Right cardiac atrium (tissue), 5 donors: ENCODE measurements at regions of chr4 and their contacts with region 1.

Region 1: GRCh38 chr4:121252224-121252806 is 88.2 kb upstream of the TNIP3 start:
- DNase-seq: peak; percentile 55 to 69 (median 69)
- ATAC-seq: peak; percentile 64 to 83
- H3K4me3 ChIP-seq: no peak overlapping the region
- H3K27ac ChIP-seq: no peak overlapping the region
- H3K4me1 ChIP-seq: no peaks in the 10 kb centered on the region
- H3K27me3 ChIP-seq: no peaks in the 10 kb centered on the region

Region 2: DNA sequence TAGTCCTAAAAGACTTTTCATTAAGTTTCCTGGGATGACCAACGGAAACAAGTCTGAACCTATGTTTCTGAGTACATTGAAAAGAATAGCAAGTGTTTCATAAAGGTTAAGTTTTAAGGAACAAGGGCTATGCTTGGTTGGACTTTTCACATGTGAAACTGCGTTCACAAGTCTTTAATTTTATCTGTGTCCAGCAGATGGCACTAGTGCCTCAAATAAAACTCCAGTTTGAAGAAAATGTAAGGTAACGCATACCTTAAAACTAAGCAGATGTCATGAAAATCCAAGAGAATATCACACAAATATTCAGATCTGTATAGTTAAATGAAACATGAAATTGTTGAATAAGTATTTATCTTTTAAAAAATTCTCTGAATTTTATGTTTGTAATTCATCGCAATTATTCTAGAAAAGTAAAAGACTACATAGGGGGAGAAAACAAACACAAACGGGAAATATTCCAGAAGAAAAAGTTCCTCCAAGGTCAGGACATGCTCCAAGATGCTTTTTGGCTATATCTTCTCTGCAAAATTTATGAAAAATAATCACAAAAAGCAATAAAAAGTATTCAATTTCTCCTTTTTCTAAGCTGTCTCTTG is 1096.1 kb before region 1 on chr4:
- intact Hi-C with region 1: loop called in 1 of 4 experiments (anchors 5 kb)
- DNase-seq: no peak
- ATAC-seq: no peak
- H3K4me3 ChIP-seq: no peak overlapping the region
- H3K27ac ChIP-seq: no peak overlapping the region
- H3K4me1 ChIP-seq: no peaks in the 10 kb centered on the region
- H3K27me3 ChIP-seq: no peaks in the 10 kb centered on the region

Region 3: GRCh38 chr4:121192480-121192879 is 59.8 kb before region 1 on chr4:
- intact Hi-C with region 1: loop called in 2 of 4 experiments (anchors 5 kb)
- DNase-seq: no peak
- ATAC-seq: no peak
- H3K4me3 ChIP-seq: no peak overlapping the region
- H3K27ac ChIP-seq: no peak overlapping the region
- H3K4me1 ChIP-seq: no peaks in the 10 kb centered on the region
- H3K27me3 ChIP-seq: no peaks in the 10 kb centered on the region